T-cell (primary cell): ENCODE measurements at regions of chr20 and their contacts with region 1.

Region 1: GRCh38 chr20:35947489-35947888 is 6.8 kb downstream of the SCAND1 start:
- DNase-seq: peak in 20 of 35 experiments; percentile 3 to 39 (median 8)
- ATAC-seq: peak; percentile 45 to 68 (median 55)
- H3K4me3 ChIP-seq: no peak overlapping the region
- H3K4me3 Mint-ChIP-seq: no peak overlapping the region
- H3K27ac ChIP-seq: peak overlapping the region; percentile 5
- H3K27ac Mint-ChIP-seq: peak overlapping the region in 1 of 2 donors; percentile 20
- H3K4me1 ChIP-seq: peaks cover under 1 to 9% of the 10 kb centered on the region in 2 experiments
- H3K4me1 Mint-ChIP-seq: peaks cover 8 to 27% (median 9%) of the 10 kb centered on the region in 3 donors
- H3K27me3 ChIP-seq: no peaks in the 10 kb centered on the region
- H3K27me3 Mint-ChIP-seq: no peaks in the 10 kb centered on the region

Region 2: GRCh38 chr20:36004045-36004444 is 56.6 kb after region 1 on chr20:
- CTCF ChIA-PET with region 1: no interaction called
- POLR2A ChIA-PET with region 1: no interaction called
- DNase-seq: no peak
- ATAC-seq: no peak
- H3K4me3 ChIP-seq: no peak overlapping the region
- H3K4me3 Mint-ChIP-seq: no peak overlapping the region
- H3K27ac ChIP-seq: no peak overlapping the region
- H3K27ac Mint-ChIP-seq: no peak overlapping the region
- H3K4me1 ChIP-seq: no peaks in the 10 kb centered on the region
- H3K4me1 Mint-ChIP-seq: no peaks in the 10 kb centered on the region
- H3K27me3 ChIP-seq: peaks cover 0 to 12% of the 10 kb centered on the region in 2 experiments
- H3K27me3 Mint-ChIP-seq: peaks cover 0 to 18% of the 10 kb centered on the region in 2 donors

Region 3: DNA sequence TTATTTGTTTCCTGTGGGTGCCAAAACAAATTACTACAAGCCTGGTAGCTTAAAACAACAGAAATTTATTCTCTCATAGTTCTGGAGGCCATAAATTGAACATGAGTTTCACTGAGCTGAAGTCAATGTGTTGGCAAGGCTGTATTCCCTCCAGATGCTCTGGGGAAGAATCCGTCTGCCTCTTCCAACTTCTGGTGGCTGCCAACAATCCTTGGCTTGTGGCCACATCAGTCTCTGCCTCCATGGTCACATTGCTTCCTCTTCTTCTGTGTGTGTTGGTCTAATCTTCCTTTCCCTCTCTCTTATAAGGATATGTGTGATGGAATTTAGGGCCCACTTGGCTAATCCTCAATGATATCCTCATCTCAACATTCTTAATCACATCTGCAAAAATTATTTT is 114.3 kb after region 1 on chr20:
- CTCF ChIA-PET with region 1: no interaction called
- POLR2A ChIA-PET with region 1: interaction called in 1 of 2 experiments, 16 read pairs
- DNase-seq: no peak
- ATAC-seq: no peak
- H3K4me3 ChIP-seq: no peak overlapping the region
- H3K4me3 Mint-ChIP-seq: no peak overlapping the region
- H3K27ac ChIP-seq: no peak overlapping the region
- H3K27ac Mint-ChIP-seq: no peak overlapping the region
- H3K4me1 ChIP-seq: peaks cover 0 to 16% of the 10 kb centered on the region in 2 experiments
- H3K4me1 Mint-ChIP-seq: peaks cover 4 to 10% (median 7%) of the 10 kb centered on the region in 3 donors
- H3K27me3 ChIP-seq: peaks cover 0 to 17% of the 10 kb centered on the region in 2 experiments
- H3K27me3 Mint-ChIP-seq: no peaks in the 10 kb centered on the region